ENCODE measurements at regions of chr10 and their contacts with region 1.

Region 1: DNA sequence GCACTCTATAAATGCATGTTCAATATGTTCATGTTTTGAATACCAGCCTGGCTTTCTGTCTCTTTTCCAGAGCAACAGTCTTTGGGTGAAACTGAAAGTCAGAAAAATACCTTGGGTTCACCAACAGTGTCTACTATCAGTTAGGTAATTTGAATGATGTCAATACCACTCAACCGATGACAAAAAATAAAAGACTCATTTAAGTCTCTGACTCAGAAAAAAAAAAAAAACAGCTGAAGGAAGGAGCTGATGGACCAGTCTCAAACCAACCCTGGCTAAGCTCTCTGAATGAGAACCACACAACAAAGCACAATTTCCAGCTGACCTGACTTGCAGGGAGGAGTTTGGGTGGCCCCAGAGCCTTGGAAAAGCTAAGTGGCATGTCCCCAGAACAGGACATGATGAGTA is 42.5 kb downstream of the ABLIM1 start:
- DNase-seq: no peak
- ATAC-seq: no peak
- H3K4me3 ChIP-seq: no peak overlapping the region
- H3K27ac ChIP-seq: no peak overlapping the region
- H3K4me1 ChIP-seq: no peaks in the 10 kb centered on the region
- H3K27me3 ChIP-seq: no peaks in the 10 kb centered on the region

Region 2: GRCh38 chr10:114561008-114561532 is 54.5 kb before region 1 on chr10:
- intact Hi-C with region 1: loop called in 1 of 2 experiments (anchors 5 kb)
- DNase-seq: no peak
- ATAC-seq: no peak
- H3K4me3 ChIP-seq: no peak overlapping the region
- H3K27ac ChIP-seq: no peak overlapping the region
- H3K4me1 ChIP-seq: no peaks in the 10 kb centered on the region
- H3K27me3 ChIP-seq: no peaks in the 10 kb centered on the region

Region 3: GRCh38 chr10:114577133-114577532 is 38.5 kb before region 1 on chr10:
- intact Hi-C with region 1: no loop called
- DNase-seq: no peak
- ATAC-seq: no peak
- H3K4me3 ChIP-seq: no peak overlapping the region
- H3K27ac ChIP-seq: no peak overlapping the region
- H3K4me1 ChIP-seq: peaks cover 0 to 2% of the 10 kb centered on the region in 2 donors
- H3K27me3 ChIP-seq: no peaks in the 10 kb centered on the region

Region 4: DNA sequence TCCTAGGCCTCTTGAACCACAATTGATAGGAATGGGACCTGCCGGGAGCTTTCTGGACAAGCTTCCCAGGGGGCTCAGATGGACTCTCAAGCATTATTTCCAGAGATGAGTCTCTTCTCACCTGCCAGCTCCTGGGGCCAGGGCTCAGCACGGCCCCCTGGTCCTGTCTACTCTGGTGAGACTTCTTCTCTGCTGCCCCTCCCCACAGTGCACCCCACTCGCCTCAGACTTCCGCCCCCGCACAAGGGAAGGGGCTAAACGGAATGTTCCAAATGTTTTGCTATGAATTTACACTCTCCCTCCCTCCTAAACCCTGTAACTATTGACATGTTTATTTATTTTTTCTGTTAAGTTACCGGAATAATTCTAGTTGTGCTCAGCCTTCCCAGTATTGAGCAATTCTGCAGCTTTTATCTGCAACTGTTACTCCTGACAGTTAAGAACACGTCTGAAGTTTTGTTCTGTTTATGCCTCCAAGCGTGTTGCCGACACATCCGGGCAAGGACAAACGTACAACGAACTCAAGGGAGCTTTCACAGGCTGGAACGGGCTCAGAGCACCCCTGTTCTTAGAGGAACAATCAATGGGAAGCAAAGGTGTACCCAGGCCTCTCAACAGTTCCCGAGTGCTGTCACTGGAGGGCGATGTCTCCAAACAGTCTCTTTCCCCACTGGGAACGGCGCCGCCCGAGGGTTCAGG is 261.1 kb after region 1 on chr10:
- intact Hi-C with region 1: no loop called
- DNase-seq: peak; percentile 69 to 87
- ATAC-seq: no peak
- H3K4me3 ChIP-seq: no peak overlapping the region
- H3K27ac ChIP-seq: no peak overlapping the region
- H3K4me1 ChIP-seq: no peaks in the 10 kb centered on the region
- H3K27me3 ChIP-seq: no peaks in the 10 kb centered on the region

Region 5: DNA sequence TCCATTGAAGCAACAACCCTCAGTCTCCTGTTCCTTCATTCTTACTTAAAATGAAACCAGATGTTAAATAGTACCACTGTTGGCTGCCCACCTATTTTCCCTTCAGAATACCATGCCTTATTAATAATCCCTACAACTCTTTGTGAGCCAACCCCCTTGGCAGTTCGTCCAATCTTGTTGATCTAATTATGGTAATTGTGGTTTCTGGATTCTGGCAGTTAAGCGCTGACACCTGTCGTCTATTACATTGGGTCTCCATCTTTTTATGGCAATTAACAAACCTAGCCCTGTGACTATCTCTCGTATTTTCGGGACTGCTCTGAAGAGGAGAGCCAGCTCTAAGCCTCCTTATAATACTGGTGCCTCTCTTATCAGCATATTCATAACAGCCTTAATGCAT is 909.5 kb after region 1 on chr10:
- intact Hi-C with region 1: no loop called
- DNase-seq: no peak
- ATAC-seq: no peak
- H3K4me3 ChIP-seq: no peak overlapping the region
- H3K27ac ChIP-seq: no peak overlapping the region
- H3K4me1 ChIP-seq: no peaks in the 10 kb centered on the region
- H3K27me3 ChIP-seq: no peaks in the 10 kb centered on the region

Region 6: GRCh38 chr10:115974816-115975430 is 1359.3 kb after region 1 on chr10:
- intact Hi-C with region 1: loop called in 1 of 2 experiments (anchors 5 kb)
- DNase-seq: no peak
- ATAC-seq: peak; percentile 40
- H3K4me3 ChIP-seq: no peak overlapping the region
- H3K27ac ChIP-seq: peak overlapping the region; percentile 13 to 30
- H3K4me1 ChIP-seq: no peaks in the 10 kb centered on the region
- H3K27me3 ChIP-seq: no peaks in the 10 kb centered on the region